ENCODE measurements at regions of chr12 and their contacts with region 1.

Region 1: DNA sequence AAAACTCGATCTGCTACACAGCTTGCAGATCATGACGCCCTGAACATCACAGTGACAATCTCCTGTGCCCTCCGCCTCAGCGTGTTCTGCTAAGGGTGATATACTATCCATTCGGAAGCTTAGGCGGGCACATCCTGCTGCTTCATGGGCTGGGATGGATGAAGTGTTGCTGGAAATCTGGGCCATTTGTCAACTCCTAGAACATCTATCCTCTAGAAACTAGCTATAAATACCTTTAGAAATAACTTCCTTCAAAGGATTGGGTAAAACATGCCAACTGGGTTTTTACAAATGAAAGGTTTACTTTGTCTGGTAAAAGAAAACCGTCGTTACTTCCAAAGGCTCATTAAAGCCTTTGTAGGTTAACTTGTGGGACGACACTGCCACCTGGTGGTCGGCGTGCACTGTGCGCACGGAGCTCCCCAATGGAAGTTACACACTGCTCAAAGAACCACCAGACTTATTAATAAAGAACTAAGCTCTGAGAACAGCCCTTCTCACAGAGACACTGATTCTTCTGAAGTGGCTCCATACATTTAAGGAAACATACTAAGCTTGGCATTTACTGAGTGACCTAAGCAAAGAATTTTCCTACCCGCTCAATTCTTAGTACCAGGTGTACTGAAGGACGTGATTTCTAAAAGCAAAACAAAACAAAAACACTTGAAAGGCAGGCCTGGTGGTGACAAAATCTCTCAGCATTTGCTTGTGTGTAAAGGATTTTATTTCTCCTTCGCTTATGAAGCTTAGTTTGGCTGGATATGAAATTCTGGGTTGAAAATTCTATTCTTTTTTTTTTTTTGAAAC is 21.6 kb upstream of the CACNA2D4 start:
- DNase-seq: peak; percentile 97

Region 2: DNA sequence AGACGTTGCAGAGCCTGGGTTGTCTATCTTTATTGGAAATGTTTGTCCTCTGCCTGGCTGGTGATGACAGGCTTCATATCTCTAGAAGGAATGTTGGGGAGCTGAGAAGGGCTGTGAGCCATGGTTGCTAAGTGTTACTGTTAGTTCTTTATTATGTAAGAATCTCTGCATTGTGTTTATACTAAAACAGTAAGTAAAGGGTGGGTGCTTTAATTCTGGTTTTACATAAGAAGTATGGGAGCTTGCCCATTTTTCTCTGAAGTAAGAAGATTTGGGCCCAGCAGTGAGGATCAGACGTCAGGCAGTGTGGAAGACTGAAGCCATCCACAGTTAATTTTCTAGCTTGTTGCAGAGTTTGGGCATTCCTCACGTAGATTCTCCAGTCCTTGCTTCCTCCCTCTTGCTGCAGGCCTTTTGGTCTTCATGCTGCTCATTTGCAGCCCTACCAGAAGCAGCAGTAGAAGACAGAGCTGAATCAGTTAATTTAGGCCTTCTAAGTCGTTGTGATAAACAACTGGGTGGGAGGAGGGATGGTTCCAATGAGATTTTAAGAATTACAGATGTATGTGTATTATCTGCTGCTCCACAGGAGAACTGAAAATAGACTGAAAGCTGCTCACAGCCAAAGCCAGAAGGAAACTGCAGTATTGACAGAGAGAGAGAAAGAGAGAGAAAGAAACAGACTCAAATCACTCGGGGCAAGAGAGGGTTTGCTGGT is 289.6 kb before region 1 on chr12:
- intact Hi-C with region 1: loop called (anchors 10 kb)
- DNase-seq: no peak

Region 3: GRCh38 chr12:1865284-1865866 is 74.6 kb before region 1 on chr12:
- intact Hi-C with region 1: no loop called
- DNase-seq: no peak

Region 4: GRCh38 chr12:1882850-1883470 is 57.0 kb before region 1 on chr12:
- intact Hi-C with region 1: no loop called
- DNase-seq: peak; percentile 69

Measured in posterior vena cava (tissue), 2 donors.